Adrenal gland (tissue), 19 donors: ENCODE measurements at regions of chr5 and their contacts with region 1.

Region 1: DNA sequence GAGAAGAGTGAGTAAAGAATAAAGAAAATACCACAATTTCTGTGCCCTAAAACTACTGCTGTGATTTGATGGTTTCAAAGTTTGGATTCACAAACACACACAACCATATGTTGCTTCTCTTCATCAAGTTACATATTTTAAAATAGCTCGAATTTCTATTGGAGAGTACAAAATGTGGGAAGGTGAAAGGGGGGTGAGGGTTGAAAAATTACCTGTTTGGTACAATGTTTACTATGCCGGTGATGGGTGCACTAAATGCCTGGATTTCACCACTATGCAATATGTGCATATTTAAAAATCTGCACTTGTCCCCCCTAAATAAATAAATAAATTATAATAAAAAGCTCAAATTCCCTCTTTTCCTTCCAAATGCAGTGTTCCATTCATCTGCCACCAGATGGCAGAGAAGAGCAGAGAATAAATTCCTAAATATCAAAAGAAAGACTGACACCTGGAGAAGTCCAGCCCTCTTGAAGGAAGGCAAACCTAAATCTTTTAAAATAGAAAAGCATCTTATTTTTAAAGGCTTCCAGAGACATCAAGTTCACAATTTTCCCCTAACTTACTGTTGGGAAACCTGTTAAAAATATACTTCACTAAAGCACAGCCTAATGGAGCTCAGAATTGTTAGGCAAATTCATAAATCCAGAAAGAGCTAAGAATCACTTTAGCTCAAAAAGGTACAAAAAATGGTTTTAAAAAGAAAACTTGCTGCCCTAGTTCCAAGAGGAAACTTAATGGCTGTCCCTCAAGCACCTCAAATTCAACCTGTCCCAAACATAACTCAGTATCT is 24.8 kb upstream of the HNRNPA0 start:
- DNase-seq: no peak
- H3K4me3 ChIP-seq: no peak overlapping the region
- H3K27ac ChIP-seq: no peak overlapping the region
- H3K4me1 ChIP-seq: no peaks in the 10 kb centered on the region
- H3K27me3 ChIP-seq: no peaks in the 10 kb centered on the region
- CTCF ChIP-seq: peak; percentile 63 to 86 (median 83)
- POLR2A ChIP-seq: no peak

Region 2: GRCh38 chr5:137822158-137822764 is 43.3 kb after region 1 on chr5:
- intact Hi-C with region 1: loop called (anchors 5 kb)
- DNase-seq: peak; percentile 40 to 70 (median 53)
- H3K4me3 ChIP-seq: no peak overlapping the region
- H3K27ac ChIP-seq: no peak overlapping the region
- H3K4me1 ChIP-seq: no peaks in the 10 kb centered on the region
- H3K27me3 ChIP-seq: no peaks in the 10 kb centered on the region
- CTCF ChIP-seq: peak; percentile 25 to 58 (median 49)
- POLR2A ChIP-seq: no peak

Region 3: GRCh38 chr5:137901011-137901817 is 122.2 kb after region 1 on chr5:
- intact Hi-C with region 1: no loop called
- DNase-seq: peak in 1 of 7 donors; percentile 12
- H3K4me3 ChIP-seq: peak overlapping the region in 1 of 4 donors; percentile 30
- H3K27ac ChIP-seq: peak overlapping the region in 2 of 5 donors; percentile 6 to 8
- H3K4me1 ChIP-seq: peaks cover 4 to 8% of the 10 kb centered on the region in 2 donors
- H3K27me3 ChIP-seq: no peaks in the 10 kb centered on the region
- CTCF ChIP-seq: no peak
- POLR2A ChIP-seq: no peak

Region 4: GRCh38 chr5:137935190-137935589 is 156.2 kb after region 1 on chr5:
- intact Hi-C with region 1: loop called in 1 of 2 experiments (anchors 5 kb)
- DNase-seq: no peak
- H3K4me3 ChIP-seq: no peak overlapping the region
- H3K27ac ChIP-seq: no peak overlapping the region
- H3K4me1 ChIP-seq: peaks cover 0 to 9% of the 10 kb centered on the region in 2 donors
- H3K27me3 ChIP-seq: no peaks in the 10 kb centered on the region
- CTCF ChIP-seq: no peak
- POLR2A ChIP-seq: no peak

Region 5: DNA sequence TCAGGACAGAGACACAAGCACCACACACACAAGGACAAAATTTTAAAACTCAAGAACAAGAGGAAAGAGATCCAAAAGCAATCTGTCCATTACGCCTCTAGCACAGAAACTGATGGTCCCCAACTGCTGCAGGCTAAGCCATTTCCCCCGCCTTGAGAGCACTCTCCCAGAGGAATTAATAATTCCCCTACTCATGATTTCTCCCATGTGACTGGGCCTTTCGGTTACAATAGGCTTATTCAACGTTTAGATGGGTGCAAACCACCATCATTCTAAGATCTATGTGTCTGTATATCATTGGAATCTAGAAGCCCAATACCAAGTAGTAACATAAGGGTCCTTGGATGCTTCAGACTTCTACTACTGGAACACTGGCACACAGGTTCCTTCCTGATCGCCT is 380.7 kb after region 1 on chr5:
- intact Hi-C with region 1: no loop called
- DNase-seq: no peak
- H3K4me3 ChIP-seq: no peak overlapping the region
- H3K27ac ChIP-seq: no peak overlapping the region
- H3K4me1 ChIP-seq: no peaks in the 10 kb centered on the region
- H3K27me3 ChIP-seq: no peaks in the 10 kb centered on the region
- CTCF ChIP-seq: no peak
- POLR2A ChIP-seq: no peak